Vagina (tissue), 2 donors: ENCODE measurements at regions of chr18 and their contacts with region 1.

Region 1: GRCh38 chr18:32183503-32183902 is 6.3 kb upstream of the MEP1B start:
- DNase-seq: no peak
- H3K4me3 ChIP-seq: no peak overlapping the region
- H3K27ac ChIP-seq: no peak overlapping the region
- H3K4me1 ChIP-seq: no peaks in the 10 kb centered on the region
- H3K27me3 ChIP-seq: no peaks in the 10 kb centered on the region
- CTCF ChIP-seq: no peak
- POLR2A ChIP-seq: no peak

Region 2: GRCh38 chr18:32167975-32168730 is 15.3 kb before region 1 on chr18:
- intact Hi-C with region 1: loop called (anchors 2 kb)
- DNase-seq: no peak
- H3K4me3 ChIP-seq: no peak overlapping the region
- H3K27ac ChIP-seq: no peak overlapping the region
- H3K4me1 ChIP-seq: no peaks in the 10 kb centered on the region
- H3K27me3 ChIP-seq: no peaks in the 10 kb centered on the region
- CTCF ChIP-seq: no peak
- POLR2A ChIP-seq: no peak

Region 3: GRCh38 chr18:32261003-32261402 is 77.5 kb after region 1 on chr18:
- intact Hi-C with region 1: no loop called
- DNase-seq: no peak
- H3K4me3 ChIP-seq: no peak overlapping the region
- H3K27ac ChIP-seq: no peak overlapping the region
- H3K4me1 ChIP-seq: no peaks in the 10 kb centered on the region
- H3K27me3 ChIP-seq: no peaks in the 10 kb centered on the region
- CTCF ChIP-seq: no peak
- POLR2A ChIP-seq: no peak